Right cardiac atrium (tissue), 5 donors: ENCODE measurements at regions of chr3 and their contacts with region 1.

Region 1: GRCh38 chr3:107429320-107430181 is 52.3 kb downstream of the CCDC54 start:
- DNase-seq: peak; percentile 79 to 90 (median 86)
- ATAC-seq: peak; percentile 89 to 91
- H3K4me3 ChIP-seq: peak overlapping the region; percentile 61
- H3K27ac ChIP-seq: peak overlapping the region; percentile 85
- H3K4me1 ChIP-seq: peaks cover 2% of the 10 kb centered on the region
- H3K27me3 ChIP-seq: no peaks in the 10 kb centered on the region

Region 2: GRCh38 chr3:107264888-107265287 is 164.7 kb before region 1 on chr3:
- intact Hi-C with region 1: loop called in 2 of 4 experiments (anchors 5 to 10 kb)
- DNase-seq: no peak
- ATAC-seq: peak; percentile 58 to 86
- H3K4me3 ChIP-seq: no peak overlapping the region
- H3K27ac ChIP-seq: no peak overlapping the region
- H3K4me1 ChIP-seq: peaks cover 2% of the 10 kb centered on the region
- H3K27me3 ChIP-seq: no peaks in the 10 kb centered on the region

Region 3: GRCh38 chr3:107578523-107578922 is 149.0 kb after region 1 on chr3:
- intact Hi-C with region 1: no loop called
- DNase-seq: no peak
- ATAC-seq: no peak
- H3K4me3 ChIP-seq: no peak overlapping the region
- H3K27ac ChIP-seq: no peak overlapping the region
- H3K4me1 ChIP-seq: peaks cover 4% of the 10 kb centered on the region
- H3K27me3 ChIP-seq: no peaks in the 10 kb centered on the region

Region 4: GRCh38 chr3:107690522-107691138 is 261.1 kb after region 1 on chr3:
- intact Hi-C with region 1: no loop called
- DNase-seq: no peak
- ATAC-seq: peak in 1 of 2 donors; percentile 64
- H3K4me3 ChIP-seq: no peak overlapping the region
- H3K27ac ChIP-seq: no peak overlapping the region
- H3K4me1 ChIP-seq: no peaks in the 10 kb centered on the region
- H3K27me3 ChIP-seq: no peaks in the 10 kb centered on the region

Region 5: DNA sequence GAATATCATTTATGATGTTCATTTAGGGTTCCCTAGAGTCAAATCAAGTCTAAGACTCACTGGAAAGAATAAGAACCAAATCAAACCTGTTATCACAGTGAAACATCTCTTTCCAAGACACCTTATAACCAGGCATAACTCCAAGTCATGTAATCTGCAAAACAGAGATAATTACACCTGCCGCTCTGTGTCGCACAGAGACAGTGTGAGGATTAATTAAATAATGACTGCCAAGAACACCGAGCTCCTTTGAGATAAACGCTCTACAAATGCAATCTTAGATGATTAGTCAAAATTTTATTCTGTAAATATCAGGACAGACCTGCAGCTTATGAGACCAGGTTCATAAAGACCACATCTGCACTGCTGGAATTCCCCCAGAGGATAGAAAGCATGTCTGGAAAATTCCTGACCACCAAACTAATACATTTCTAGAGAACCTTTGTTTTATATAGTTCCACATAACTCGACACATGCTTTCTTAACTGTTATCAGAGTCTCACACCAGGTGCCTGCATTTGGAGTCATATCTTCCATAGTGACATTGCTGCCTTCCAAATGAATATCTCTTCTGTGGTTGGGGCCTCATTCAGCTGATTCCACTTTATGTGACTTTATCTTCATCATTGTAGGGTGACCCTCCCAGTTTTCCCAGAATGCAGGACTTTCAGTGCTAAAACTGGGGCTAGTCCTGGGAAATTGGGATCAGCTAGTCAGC is 408.5 kb after region 1 on chr3:
- intact Hi-C with region 1: no loop called
- DNase-seq: no peak
- ATAC-seq: no peak
- H3K4me3 ChIP-seq: no peak overlapping the region
- H3K27ac ChIP-seq: no peak overlapping the region
- H3K4me1 ChIP-seq: no peaks in the 10 kb centered on the region
- H3K27me3 ChIP-seq: no peaks in the 10 kb centered on the region

Region 6: GRCh38 chr3:107870943-107871638 is 441.5 kb after region 1 on chr3:
- intact Hi-C with region 1: no loop called
- DNase-seq: no peak
- ATAC-seq: no peak
- H3K4me3 ChIP-seq: no peak overlapping the region
- H3K27ac ChIP-seq: no peak overlapping the region
- H3K4me1 ChIP-seq: no peaks in the 10 kb centered on the region
- H3K27me3 ChIP-seq: no peaks in the 10 kb centered on the region